ENCODE measurements at regions of chr5 and their contacts with region 1.

Region 1: DNA sequence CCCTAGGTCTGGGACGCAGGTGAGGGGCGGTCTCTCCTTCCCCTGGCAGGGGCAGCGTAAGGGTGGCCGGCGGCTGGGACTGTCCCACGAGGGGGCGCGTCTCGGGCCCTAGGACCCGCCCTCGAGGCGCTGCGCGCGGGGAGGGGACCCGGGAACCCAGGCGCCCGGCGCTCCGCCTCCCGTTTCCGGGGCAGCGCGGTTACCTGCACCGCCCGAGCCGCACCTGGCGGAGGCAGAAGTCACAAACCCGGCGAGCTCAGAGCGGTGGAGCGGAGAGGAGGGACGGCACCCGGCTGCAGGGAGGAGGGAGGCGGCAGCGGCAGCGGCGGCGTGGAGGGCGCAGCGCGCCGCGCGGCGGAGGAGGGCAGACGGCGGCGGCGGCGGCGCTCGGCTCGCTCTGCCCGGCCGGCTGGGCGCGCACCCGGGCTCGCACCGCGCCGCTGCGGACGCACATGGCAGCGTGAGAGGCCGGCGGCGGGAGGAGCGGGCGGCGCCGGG is at the start of gene WWC1:
- DNase-seq: peak in 6 of 10 donors; percentile 14 to 72 (median 58)
- H3K4me3 ChIP-seq: peak within 1 kb of the TSS; percentile 19 to 76 (median 63)
- H3K27ac ChIP-seq: peak within 1 kb of the TSS in 29 of 59 donors; percentile 3 to 68 (median 40)
- H3K27me3 ChIP-seq: peaks cover 0 to 41% (median 0%) of the 10 kb centered on the region in 45 donors
- CTCF ChIP-seq: peak in 30 of 56 donors; percentile 8 to 50 (median 24)
- total RNA-seq, gene WWC1: 35.7 to 130 (median 56.1) TPM

Region 2: GRCh38 chr5:167802778-167803315 is 488.7 kb before region 1 on chr5:
- intact Hi-C with region 1: no loop called
- DNase-seq: no peak
- H3K4me3 ChIP-seq: no peak overlapping the region
- H3K27ac ChIP-seq: no peak overlapping the region
- H3K27me3 ChIP-seq: peaks cover 0 to 2% (median 0%) of the 10 kb centered on the region in 45 donors
- CTCF ChIP-seq: no peak

Region 3: DNA sequence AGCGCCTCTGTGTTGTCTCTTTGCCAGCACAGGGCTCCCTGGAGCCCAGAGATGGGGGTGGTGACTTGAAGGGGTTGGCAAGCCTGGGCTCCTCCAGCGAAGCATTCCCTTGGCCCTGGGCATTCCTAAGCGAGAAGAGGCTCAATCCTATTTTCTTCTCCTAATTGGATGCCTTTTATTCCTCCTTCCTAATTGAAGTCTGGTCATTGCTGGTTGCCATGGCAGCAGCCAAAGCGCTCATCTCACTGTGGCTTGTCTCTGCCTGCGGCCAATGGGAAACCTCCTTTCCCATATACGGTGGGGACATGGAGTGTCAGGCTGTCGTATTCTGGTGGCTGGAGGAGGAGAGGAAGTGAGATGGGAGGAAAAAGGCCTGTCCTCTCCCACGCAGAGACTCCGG is 142.5 kb after region 1 on chr5:
- intact Hi-C with region 1: loop called in 1 of 2 experiments (anchors 10 kb)
- DNase-seq: peak in 9 of 10 donors; percentile 14 to 87 (median 71)
- H3K4me3 ChIP-seq: no peak overlapping the region
- H3K27ac ChIP-seq: peak overlapping the region in 33 of 59 donors; percentile 11 to 64 (median 40)
- H3K27me3 ChIP-seq: no peaks in the 10 kb centered on the region
- CTCF ChIP-seq: no peak

Region 4: DNA sequence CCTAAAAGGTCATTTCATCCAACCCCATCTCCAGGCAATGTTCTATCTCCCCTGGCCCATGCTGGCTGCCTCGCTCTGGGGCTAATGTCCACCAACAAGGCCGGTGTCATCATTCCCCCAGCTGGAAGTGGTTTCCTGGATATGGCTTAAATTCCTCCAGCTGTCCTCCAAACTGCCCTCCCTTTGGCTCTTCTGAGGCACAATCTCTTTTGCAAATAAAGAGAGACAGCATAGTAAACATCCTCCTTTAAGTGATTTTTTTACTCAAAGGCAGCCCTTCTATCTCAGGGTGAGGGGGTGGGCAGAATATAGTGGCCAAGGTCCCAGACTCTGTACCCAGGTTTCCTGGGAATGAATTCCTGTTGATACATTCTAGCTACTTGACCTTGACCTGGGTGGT is 405.1 kb after region 1 on chr5:
- intact Hi-C with region 1: no loop called
- DNase-seq: no peak
- H3K4me3 ChIP-seq: no peak overlapping the region
- H3K27ac ChIP-seq: no peak overlapping the region
- H3K27me3 ChIP-seq: peaks cover 0 to 19% (median 0%) of the 10 kb centered on the region in 45 donors
- CTCF ChIP-seq: no peak